Activated CD4-positive, alpha-beta T cell treated with anti-CD3 and anti-CD28 coated beads for 36 hours (primary cell): ENCODE measurements at regions of chr20 and their contacts with region 1.

Region 1: GRCh38 chr20:33460711-33461110 is 17.1 kb upstream of the SNTA1 start:
- DNase-seq: peak; percentile 35
- ATAC-seq: peak; percentile 43
- H3K4me3 Mint-ChIP-seq: no peak overlapping the region
- H3K27ac Mint-ChIP-seq: no peak overlapping the region
- H3K4me1 Mint-ChIP-seq: no peaks in the 10 kb centered on the region
- H3K27me3 Mint-ChIP-seq: no peaks in the 10 kb centered on the region

Region 2: GRCh38 chr20:33653218-33653899 is 192.6 kb after region 1 on chr20:
- CTCF ChIA-PET with region 1: interaction called, 3 read pairs
- POLR2A ChIA-PET with region 1: no interaction called
- intact Hi-C with region 1: loop called (anchors 1 to 5 kb)
- DNase-seq: peak; percentile 61
- ATAC-seq: peak; percentile 34
- H3K4me3 Mint-ChIP-seq: no peak overlapping the region
- H3K27ac Mint-ChIP-seq: peak overlapping the region; percentile 78
- H3K4me1 Mint-ChIP-seq: peaks cover 41% of the 10 kb centered on the region
- H3K27me3 Mint-ChIP-seq: no peaks in the 10 kb centered on the region

Region 3: DNA sequence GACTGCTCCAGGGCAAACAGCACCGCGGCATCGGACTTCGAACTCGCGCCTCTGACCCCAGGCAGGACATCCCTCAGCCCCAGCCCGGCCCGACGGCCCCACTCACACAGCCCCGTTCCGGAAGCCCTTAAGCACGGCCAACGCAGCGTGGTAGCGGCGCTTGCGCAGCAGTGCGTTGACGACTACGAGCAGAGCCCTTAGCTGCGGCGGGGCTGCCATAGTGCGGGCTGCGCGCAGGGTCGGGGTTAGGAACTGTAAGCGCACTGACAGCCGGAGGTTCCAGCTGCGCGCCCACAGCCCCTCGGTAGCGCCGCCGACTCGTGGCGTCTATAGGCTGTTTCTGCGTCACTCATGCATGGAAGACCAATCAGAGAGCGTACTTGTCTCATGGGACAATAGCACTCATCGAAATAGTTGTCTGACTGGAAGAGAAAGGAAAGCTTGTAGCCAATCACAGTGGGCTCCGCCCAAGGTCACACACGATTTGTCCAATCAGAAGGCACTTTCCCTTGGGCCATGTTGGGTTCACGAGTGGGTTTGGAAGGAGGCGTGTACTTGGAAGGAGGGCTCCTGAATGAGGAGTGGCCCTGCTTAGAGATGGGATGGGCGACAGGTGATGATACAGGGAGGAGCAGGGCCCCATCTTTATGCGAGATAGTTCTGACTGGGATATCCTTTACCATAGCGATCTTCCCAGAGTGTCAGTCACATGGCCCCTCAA is 259.4 kb after region 1 on chr20 and contains the start of gene PXMP4:
- CTCF ChIA-PET with region 1: no interaction called
- POLR2A ChIA-PET with region 1: no interaction called
- intact Hi-C with region 1: loop called in 1 of 2 experiments (anchors 1 kb)
- DNase-seq: peak; percentile 92
- ATAC-seq: peak; percentile 99
- H3K4me3 Mint-ChIP-seq: peak within 1 kb of the TSS; percentile 88
- H3K27ac Mint-ChIP-seq: peak within 1 kb of the TSS; percentile 83
- H3K4me1 Mint-ChIP-seq: peaks cover 18% of the 10 kb centered on the region
- H3K27me3 Mint-ChIP-seq: no peaks in the 10 kb centered on the region
- total RNA-seq, gene PXMP4: 8.8 to 10.2 TPM